ENCODE measurements at regions of chr12 and their contacts with region 1.

Region 1: DNA sequence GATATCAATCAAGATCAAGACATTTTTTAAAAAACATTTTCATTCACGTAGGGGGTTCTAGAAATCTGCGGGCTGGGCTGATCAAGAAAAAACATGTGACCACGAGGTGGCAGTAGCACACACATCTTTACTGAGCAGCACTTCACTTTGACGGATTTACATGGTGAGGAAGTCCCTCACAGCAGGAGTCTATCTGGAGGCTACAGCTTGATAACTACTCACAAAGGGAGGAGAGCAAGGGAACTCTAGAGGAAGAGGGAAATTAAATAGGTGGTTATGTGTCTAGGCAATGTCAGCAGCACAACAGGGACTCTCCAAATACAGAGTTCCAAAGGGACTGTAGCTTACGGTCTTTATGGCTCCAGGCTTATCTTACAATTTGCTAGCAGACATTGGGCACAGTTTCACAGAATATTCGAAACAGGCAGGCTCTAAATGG is 248.1 kb downstream of the DPY19L2 start:
- DNase-seq: peak; percentile 99
- H3K4me3 ChIP-seq: no peak overlapping the region
- H3K27ac ChIP-seq: peak overlapping the region; percentile 22
- H3K4me1 ChIP-seq: peaks cover 9% of the 10 kb centered on the region
- H3K27me3 ChIP-seq: no peaks in the 10 kb centered on the region
- CTCF ChIP-seq: peak; percentile 90

Region 2: GRCh38 chr12:63668028-63668799 is 248.0 kb after region 1 on chr12 and contains the start of gene DPY19L2:
- CTCF ChIA-PET with region 1: no interaction called
- POLR2A ChIA-PET with region 1: no interaction called
- intact Hi-C with region 1: loop called (anchors 5 kb)
- DNase-seq: peak; percentile 71
- H3K4me3 ChIP-seq: peak within 1 kb of the TSS; percentile 57
- H3K27ac ChIP-seq: no peak within 1 kb of the TSS
- H3K4me1 ChIP-seq: no peaks in the 10 kb centered on the region
- H3K27me3 ChIP-seq: peaks cover 17% of the 10 kb centered on the region
- CTCF ChIP-seq: no peak
- total RNA-seq, gene DPY19L2: 4.2 and 7.5 TPM in 2 replicates

Region 3: GRCh38 chr12:63779498-63780481 is 359.6 kb after region 1 on chr12 and contains the start of gene RXYLT1:
- CTCF ChIA-PET with region 1: no interaction called
- POLR2A ChIA-PET with region 1: no interaction called
- intact Hi-C with region 1: loop called (anchors 5 kb)
- DNase-seq: peak; percentile 86
- H3K4me3 ChIP-seq: peak within 1 kb of the TSS; percentile 81
- H3K27ac ChIP-seq: peak within 1 kb of the TSS; percentile 95
- H3K4me1 ChIP-seq: no peaks in the 10 kb centered on the region
- H3K27me3 ChIP-seq: no peaks in the 10 kb centered on the region
- CTCF ChIP-seq: no peak
- total RNA-seq, gene RXYLT1: 16.8 and 21.1 TPM in 2 replicates

Region 4: DNA sequence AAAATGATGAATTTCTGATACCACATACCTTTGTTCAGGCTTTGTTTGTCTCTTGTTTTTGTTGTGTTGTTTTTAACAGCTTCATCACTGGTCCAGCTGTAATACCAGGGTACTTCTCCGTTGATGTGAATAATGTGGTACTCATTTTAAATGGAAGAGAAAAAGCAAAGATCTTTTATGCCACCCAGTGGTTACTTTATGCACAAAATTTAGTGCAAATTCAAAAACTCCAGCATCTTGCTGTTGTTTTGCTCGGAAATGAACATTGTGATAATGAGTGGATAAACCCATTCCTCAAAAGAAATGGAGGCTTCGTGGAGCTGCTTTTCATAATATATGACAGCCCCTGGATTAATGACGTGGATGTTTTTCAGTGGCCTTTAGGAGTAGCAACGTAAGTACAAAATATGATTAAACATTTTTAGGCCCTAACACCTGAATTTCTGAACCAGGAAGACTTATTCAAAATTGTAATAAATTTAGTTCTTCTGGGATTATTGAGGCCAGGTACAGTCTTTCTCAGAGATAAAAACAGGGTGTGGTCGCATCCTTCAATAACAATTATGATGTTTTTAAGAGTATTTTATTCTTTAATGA is 381.9 kb after region 1 on chr12:
- CTCF ChIA-PET with region 1: no interaction called
- POLR2A ChIA-PET with region 1: no interaction called
- intact Hi-C with region 1: loop called (anchors 5 kb)
- DNase-seq: peak; percentile 55
- H3K4me3 ChIP-seq: no peak overlapping the region
- H3K27ac ChIP-seq: no peak overlapping the region
- H3K4me1 ChIP-seq: no peaks in the 10 kb centered on the region
- H3K27me3 ChIP-seq: no peaks in the 10 kb centered on the region
- CTCF ChIP-seq: peak; percentile 65